B cell (primary cell): ENCODE measurements at regions of chr3 and their contacts with region 1.

Region 1: DNA sequence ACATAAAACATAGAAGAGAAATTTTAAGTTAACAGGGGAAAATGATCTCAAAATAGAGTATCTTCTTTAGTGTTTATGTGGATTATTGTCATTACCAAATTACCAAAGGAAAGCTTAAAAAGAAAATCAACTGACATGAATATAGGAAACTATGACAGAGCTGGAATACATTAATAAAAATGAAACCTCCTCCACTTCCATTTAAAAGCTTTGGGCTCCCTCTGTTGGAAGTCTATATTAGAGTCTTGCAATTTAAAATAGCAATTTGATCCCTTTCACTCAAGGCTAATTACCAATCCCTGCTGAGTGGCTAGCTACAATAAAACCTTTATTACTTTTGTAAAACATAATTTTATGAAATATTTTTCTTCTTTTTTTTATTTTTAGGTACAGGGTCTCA is 61.4 kb upstream of the IMPG2 start:
- DNase-seq: peak; percentile 36
- ATAC-seq: peak; percentile 34
- H3K4me3 ChIP-seq: no peak overlapping the region
- H3K4me3 Mint-ChIP-seq: no peak overlapping the region
- H3K27ac ChIP-seq: no peak overlapping the region
- H3K27ac Mint-ChIP-seq: no peak overlapping the region
- H3K4me1 ChIP-seq: peaks cover 4 to 13% of the 10 kb centered on the region in 2 donors
- H3K4me1 Mint-ChIP-seq: peaks cover 45% of the 10 kb centered on the region
- H3K27me3 ChIP-seq: no peaks in the 10 kb centered on the region
- H3K27me3 Mint-ChIP-seq: no peaks in the 10 kb centered on the region
- CTCF ChIP-seq: peak; percentile 54

Region 2: GRCh38 chr3:100737334-100737733 is 644.5 kb before region 1 on chr3:
- CTCF ChIA-PET with region 1: no interaction called
- POLR2A ChIA-PET with region 1: no interaction called
- intact Hi-C with region 1: loop called (anchors 5 kb)
- DNase-seq: no peak
- ATAC-seq: no peak
- H3K4me3 ChIP-seq: no peak overlapping the region
- H3K4me3 Mint-ChIP-seq: no peak overlapping the region
- H3K27ac ChIP-seq: no peak overlapping the region
- H3K27ac Mint-ChIP-seq: no peak overlapping the region
- H3K4me1 ChIP-seq: no peaks in the 10 kb centered on the region
- H3K4me1 Mint-ChIP-seq: no peaks in the 10 kb centered on the region
- H3K27me3 ChIP-seq: no peaks in the 10 kb centered on the region
- H3K27me3 Mint-ChIP-seq: no peaks in the 10 kb centered on the region
- CTCF ChIP-seq: peak; percentile 27